ENCODE measurements at regions of chr2 and their contacts with region 1.

Region 1: GRCh38 chr2:148989882-148990493 is 48.5 kb upstream of the LYPD6B start:
- DNase-seq: peak in 8 of 9 donors; percentile 28 to 65 (median 56)
- ATAC-seq: peak; percentile 86
- H3K4me3 ChIP-seq: no peak overlapping the region
- H3K4me3 Mint-ChIP-seq: no peak overlapping the region
- H3K27ac ChIP-seq: no peak overlapping the region
- H3K27ac Mint-ChIP-seq: no peak overlapping the region
- H3K4me1 ChIP-seq: no peaks in the 10 kb centered on the region
- H3K4me1 Mint-ChIP-seq: peaks cover 0 to 4% (median 4%) of the 10 kb centered on the region in 7 donors
- H3K27me3 ChIP-seq: no peaks in the 10 kb centered on the region
- H3K27me3 Mint-ChIP-seq: no peaks in the 10 kb centered on the region

Region 2: DNA sequence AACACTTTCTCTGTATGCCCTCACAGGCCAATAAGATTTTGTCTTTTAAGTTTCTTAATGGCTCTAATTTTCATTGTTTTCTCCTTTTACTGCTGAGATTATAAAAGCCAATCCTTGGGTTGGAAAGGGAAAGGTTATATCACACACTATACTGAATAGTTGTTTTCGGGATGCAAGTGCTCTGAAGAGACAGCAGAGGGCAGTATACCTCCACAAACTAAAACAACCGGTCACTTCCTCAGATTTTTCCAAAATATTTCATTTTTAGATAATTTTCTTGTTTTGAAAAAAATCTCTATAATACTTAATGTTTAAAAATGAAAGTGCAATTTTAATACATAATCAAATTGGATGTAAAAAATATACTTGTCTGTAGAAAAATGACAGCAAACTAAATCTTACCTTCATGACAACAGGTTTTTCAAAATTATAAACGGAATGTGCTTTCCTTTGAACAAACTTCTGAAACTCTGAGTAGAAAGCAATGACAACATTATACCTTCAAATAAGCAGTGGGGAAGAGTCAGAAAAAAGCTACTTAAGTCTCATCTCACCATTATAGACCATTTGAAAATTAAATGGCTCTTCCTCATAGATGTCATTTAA is 1052.1 kb before region 1 on chr2:
- CTCF ChIA-PET with region 1: interaction called, 9 read pairs
- POLR2A ChIA-PET with region 1: no interaction called
- intact Hi-C with region 1: loop called (anchors 1 kb)
- DNase-seq: peak in 5 of 9 donors; percentile 25 to 40 (median 34)
- ATAC-seq: peak; percentile 79
- H3K4me3 ChIP-seq: no peak overlapping the region
- H3K4me3 Mint-ChIP-seq: no peak overlapping the region
- H3K27ac ChIP-seq: no peak overlapping the region
- H3K27ac Mint-ChIP-seq: peak overlapping the region in 4 of 9 donors; percentile 26 to 75 (median 42)
- H3K4me1 ChIP-seq: no peaks in the 10 kb centered on the region
- H3K4me1 Mint-ChIP-seq: peaks cover 0 to 2% (median 0%) of the 10 kb centered on the region in 7 donors
- H3K27me3 ChIP-seq: no peaks in the 10 kb centered on the region
- H3K27me3 Mint-ChIP-seq: no peaks in the 10 kb centered on the region

Region 3: DNA sequence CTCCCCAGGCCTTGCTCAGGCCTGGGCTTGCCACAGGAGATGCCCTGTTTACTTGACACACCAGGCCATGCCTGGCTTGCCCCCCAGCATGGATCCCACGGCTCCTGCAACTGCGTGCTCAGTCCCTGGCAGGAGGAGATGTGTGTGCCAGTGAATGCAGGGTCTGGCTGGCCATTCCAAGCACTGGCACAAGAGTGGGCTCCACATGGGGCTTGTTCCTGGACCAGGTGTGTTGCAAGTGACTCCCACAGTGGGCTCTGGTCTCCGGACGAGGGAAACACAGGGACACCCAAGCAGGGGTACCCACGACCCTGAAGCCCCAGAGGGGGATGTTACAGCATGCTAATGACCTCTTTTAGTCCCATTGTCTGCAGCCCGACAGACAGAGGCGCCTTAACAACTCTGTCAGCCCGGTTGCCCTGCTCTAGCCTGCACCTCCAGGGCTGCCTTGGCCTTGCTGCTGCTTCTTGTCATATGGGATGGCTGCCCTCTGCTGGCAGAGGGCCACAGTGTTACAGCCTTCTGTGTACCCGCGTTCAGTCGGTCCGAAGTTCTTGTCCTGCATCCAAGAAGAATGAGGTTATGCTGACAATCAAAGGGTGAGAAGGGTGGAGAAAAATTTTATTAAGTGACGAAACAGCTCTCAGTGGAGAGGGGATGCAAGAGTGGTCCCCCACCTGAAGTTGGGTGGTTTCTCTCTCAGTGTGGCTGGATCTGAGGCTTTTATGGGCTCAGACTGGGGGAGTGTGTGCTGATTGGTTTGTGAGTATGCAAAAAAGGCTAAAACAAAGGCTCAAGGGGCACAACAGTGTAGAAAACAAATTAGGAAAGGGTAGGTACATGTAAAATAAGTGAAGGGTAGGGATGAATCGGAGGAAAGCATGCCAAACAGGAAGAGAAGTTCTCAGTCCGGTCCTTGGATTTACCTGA is 788.6 kb before region 1 on chr2:
- CTCF ChIA-PET with region 1: no interaction called
- POLR2A ChIA-PET with region 1: no interaction called
- intact Hi-C with region 1: loop called in 1 of 2 experiments (anchors 5 kb)
- DNase-seq: peak in 8 of 9 donors; percentile 2 to 41 (median 24)
- ATAC-seq: peak; percentile 61
- H3K4me3 ChIP-seq: no peak overlapping the region
- H3K4me3 Mint-ChIP-seq: no peak overlapping the region
- H3K27ac ChIP-seq: no peak overlapping the region
- H3K27ac Mint-ChIP-seq: no peak overlapping the region
- H3K4me1 ChIP-seq: no peaks in the 10 kb centered on the region
- H3K4me1 Mint-ChIP-seq: peaks cover 0 to 7% (median 0%) of the 10 kb centered on the region in 7 donors
- H3K27me3 ChIP-seq: no peaks in the 10 kb centered on the region
- H3K27me3 Mint-ChIP-seq: no peaks in the 10 kb centered on the region

Region 4: DNA sequence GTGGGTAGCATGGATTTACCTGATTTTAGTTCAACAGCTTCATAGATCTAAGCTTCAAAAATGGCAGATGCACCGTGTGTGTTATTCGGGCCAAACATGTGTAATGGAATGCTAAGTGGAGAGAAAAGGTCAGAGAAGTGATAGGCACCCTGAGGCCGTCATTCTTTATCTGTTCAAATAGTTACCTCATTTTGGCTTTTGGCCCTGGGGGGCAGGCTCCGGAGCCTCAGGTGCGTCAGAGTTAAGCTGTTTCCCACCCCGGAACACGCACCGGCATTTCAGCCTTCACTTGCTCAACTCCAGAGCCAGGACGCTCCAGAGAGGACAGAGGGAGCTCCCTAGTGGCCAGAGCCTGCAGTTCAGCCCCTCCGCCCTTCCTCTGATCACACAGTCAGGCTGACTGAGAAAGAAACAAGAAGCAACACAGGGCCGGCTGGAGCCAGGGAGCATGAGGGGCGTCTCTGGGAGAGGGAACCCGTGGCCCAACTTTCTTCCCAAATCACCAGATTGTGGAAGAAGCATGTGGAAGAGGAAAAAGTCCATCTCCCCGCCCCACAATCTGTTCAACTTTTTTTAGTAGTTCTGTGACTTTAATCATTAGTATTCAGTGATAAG is 480.6 kb before region 1 on chr2:
- CTCF ChIA-PET with region 1: interaction called, 15 read pairs
- POLR2A ChIA-PET with region 1: no interaction called
- intact Hi-C with region 1: loop called (anchors 1 kb)
- DNase-seq: peak; percentile 54 to 86 (median 78)
- ATAC-seq: peak; percentile 100
- H3K4me3 ChIP-seq: peak overlapping the region; percentile 51
- H3K4me3 Mint-ChIP-seq: peak overlapping the region; percentile 65 to 91 (median 84)
- H3K27ac ChIP-seq: peak overlapping the region; percentile 37
- H3K27ac Mint-ChIP-seq: peak overlapping the region; percentile 13 to 90 (median 88)
- H3K4me1 ChIP-seq: no peaks in the 10 kb centered on the region
- H3K4me1 Mint-ChIP-seq: peaks cover 3 to 29% (median 16%) of the 10 kb centered on the region in 7 donors
- H3K27me3 ChIP-seq: no peaks in the 10 kb centered on the region
- H3K27me3 Mint-ChIP-seq: no peaks in the 10 kb centered on the region

Region 5: DNA sequence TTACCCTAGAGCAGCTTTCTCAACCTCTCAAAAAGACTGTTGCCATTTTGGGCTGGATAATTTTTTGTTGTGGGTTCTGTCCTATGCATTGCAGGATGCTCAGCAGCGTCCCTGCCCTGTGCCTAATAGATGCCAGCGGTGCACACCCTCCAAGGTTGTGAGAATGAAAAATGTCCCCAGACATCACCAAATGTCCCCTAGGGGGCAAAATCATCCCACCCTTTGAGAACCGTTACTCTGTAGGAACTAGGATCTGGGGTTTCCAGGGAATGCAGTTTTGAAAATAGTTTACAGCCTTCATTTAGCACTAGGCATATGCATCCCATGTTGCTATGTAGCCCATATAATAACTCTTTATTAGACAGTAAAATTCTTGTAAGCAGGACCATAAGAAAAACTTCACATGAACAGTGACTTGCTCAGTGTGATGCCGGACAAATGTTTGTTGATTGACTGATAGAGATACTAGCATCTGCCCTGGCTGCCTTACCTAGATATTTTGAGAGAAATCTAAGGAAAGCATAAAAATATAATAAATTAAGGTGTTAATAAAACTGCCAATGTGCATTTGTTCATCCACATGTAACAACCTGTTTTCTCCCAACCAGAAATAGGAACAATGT is 424.6 kb before region 1 on chr2:
- CTCF ChIA-PET with region 1: no interaction called
- POLR2A ChIA-PET with region 1: no interaction called
- intact Hi-C with region 1: loop called in 1 of 2 experiments (anchors 1 kb)
- DNase-seq: no peak
- ATAC-seq: no peak
- H3K4me3 ChIP-seq: no peak overlapping the region
- H3K4me3 Mint-ChIP-seq: no peak overlapping the region
- H3K27ac ChIP-seq: no peak overlapping the region
- H3K27ac Mint-ChIP-seq: no peak overlapping the region
- H3K4me1 ChIP-seq: peaks cover 0 to 5% of the 10 kb centered on the region in 2 donors
- H3K4me1 Mint-ChIP-seq: peaks cover 1 to 15% (median 12%) of the 10 kb centered on the region in 7 donors
- H3K27me3 ChIP-seq: no peaks in the 10 kb centered on the region
- H3K27me3 Mint-ChIP-seq: peaks cover 0 to 7% (median 0%) of the 10 kb centered on the region in 5 donors

Region 6: GRCh38 chr2:148926291-148926961 is 63.6 kb before region 1 on chr2:
- CTCF ChIA-PET with region 1: interaction called, 6 read pairs
- POLR2A ChIA-PET with region 1: interaction called, 3 read pairs
- intact Hi-C with region 1: loop called (anchors 1 kb)
- DNase-seq: peak; percentile 21 to 60 (median 48)
- ATAC-seq: peak; percentile 89
- H3K4me3 ChIP-seq: peak overlapping the region; percentile 43
- H3K4me3 Mint-ChIP-seq: peak overlapping the region; percentile 77 to 88 (median 84)
- H3K27ac ChIP-seq: no peak overlapping the region
- H3K27ac Mint-ChIP-seq: peak overlapping the region; percentile 29 to 94 (median 83)
- H3K4me1 ChIP-seq: peaks cover 0 to 7% of the 10 kb centered on the region in 2 donors
- H3K4me1 Mint-ChIP-seq: peaks cover 9 to 29% (median 22%) of the 10 kb centered on the region in 7 donors
- H3K27me3 ChIP-seq: no peaks in the 10 kb centered on the region
- H3K27me3 Mint-ChIP-seq: no peaks in the 10 kb centered on the region